ENCODE measurements at regions of chr1 and their contacts with region 1.

Region 1: GRCh38 chr1:150235852-150236613 is at the start of gene ANP32E:
- DNase-seq: peak; percentile 100
- H3K4me3 ChIP-seq: peak within 1 kb of the TSS; percentile 77
- H3K27ac ChIP-seq: peak within 1 kb of the TSS; percentile 95
- H3K4me1 ChIP-seq: peaks cover 7% of the 10 kb centered on the region
- H3K27me3 ChIP-seq: no peaks in the 10 kb centered on the region
- CTCF ChIP-seq: no peak
- total RNA-seq, gene ANP32E: 141 and 153 TPM in 2 replicates

Region 2: GRCh38 chr1:150221552-150221951 is 14.5 kb before region 1 on chr1:
- CTCF ChIA-PET with region 1: no interaction called
- POLR2A ChIA-PET with region 1: no interaction called
- intact Hi-C with region 1: loop called (anchors 2 kb)
- DNase-seq: peak; percentile 67
- H3K4me3 ChIP-seq: no peak overlapping the region
- H3K27ac ChIP-seq: no peak overlapping the region
- H3K4me1 ChIP-seq: peaks cover 5% of the 10 kb centered on the region
- H3K27me3 ChIP-seq: no peaks in the 10 kb centered on the region
- CTCF ChIP-seq: peak; percentile 60

Region 3: GRCh38 chr1:151070474-151071276 is 834.6 kb after region 1 on chr1 and contains the start of gene GABPB2:
- CTCF ChIA-PET with region 1: no interaction called
- POLR2A ChIA-PET with region 1: no interaction called
- intact Hi-C with region 1: no loop called
- DNase-seq: peak; percentile 96
- H3K4me3 ChIP-seq: peak within 1 kb of the TSS; percentile 70
- H3K27ac ChIP-seq: peak within 1 kb of the TSS; percentile 94
- H3K4me1 ChIP-seq: peaks cover 8% of the 10 kb centered on the region
- H3K27me3 ChIP-seq: no peaks in the 10 kb centered on the region
- CTCF ChIP-seq: peak; percentile 93
- total RNA-seq, gene GABPB2: 11.1 and 12.5 TPM in 2 replicates

Measured in A673 (cell line).